ENCODE measurements at regions of chr13 and their contacts with region 1.

Region 1: GRCh38 chr13:97221989-97222700 is at the start of gene MBNL2:
- DNase-seq: peak; percentile 86 to 92
- ATAC-seq: peak; percentile 90 to 95 (median 92)
- H3K4me3 ChIP-seq: peak within 1 kb of the TSS; percentile 83
- H3K27ac ChIP-seq: peak within 1 kb of the TSS; percentile 89
- H3K4me1 ChIP-seq: peaks cover 15% of the 10 kb centered on the region
- H3K27me3 ChIP-seq: no peaks in the 10 kb centered on the region
- CTCF ChIP-seq: no peak
- total RNA-seq, gene MBNL2: 54.3 to 93.1 (median 77.8) TPM

Region 2: GRCh38 chr13:97124916-97125809 is 97.0 kb before region 1 on chr13:
- intact Hi-C with region 1: loop called in 1 of 2 experiments (anchors 5 kb)
- DNase-seq: peak; percentile 43 to 76
- ATAC-seq: peak; percentile 86 to 95 (median 92)
- H3K4me3 ChIP-seq: peak overlapping the region; percentile 38
- H3K27ac ChIP-seq: peak overlapping the region; percentile 84
- H3K4me1 ChIP-seq: peaks cover 40% of the 10 kb centered on the region
- H3K27me3 ChIP-seq: no peaks in the 10 kb centered on the region
- CTCF ChIP-seq: no peak

Region 3: GRCh38 chr13:97339019-97339987 is 117.2 kb after region 1 on chr13:
- intact Hi-C with region 1: loop called (anchors 2 to 5 kb)
- DNase-seq: peak in 1 of 2 donors; percentile 44
- ATAC-seq: peak; percentile 67 to 77 (median 71)
- H3K4me3 ChIP-seq: peak overlapping the region; percentile 22
- H3K27ac ChIP-seq: peak overlapping the region; percentile 71
- H3K4me1 ChIP-seq: peaks cover 42% of the 10 kb centered on the region
- H3K27me3 ChIP-seq: no peaks in the 10 kb centered on the region
- CTCF ChIP-seq: no peak

Region 4: GRCh38 chr13:97432917-97433726 is 211.0 kb after region 1 on chr13:
- intact Hi-C with region 1: loop called in 1 of 2 experiments (anchors 10 kb)
- DNase-seq: peak; percentile 98 to 99
- ATAC-seq: peak; percentile 90 to 94 (median 92)
- H3K4me3 ChIP-seq: peak overlapping the region; percentile 82
- H3K27ac ChIP-seq: peak overlapping the region; percentile 97
- H3K4me1 ChIP-seq: peaks cover 46% of the 10 kb centered on the region
- H3K27me3 ChIP-seq: no peaks in the 10 kb centered on the region
- CTCF ChIP-seq: no peak

Measured in psoas muscle (tissue), 8 donors.